ENCODE measurements at regions of chr6 and their contacts with region 1.

Region 1: GRCh38 chr6:29598172-29598747 is 13.3 kb downstream of the OR2H2 start:
- DNase-seq: no peak
- ATAC-seq: no peak
- H3K4me3 ChIP-seq: no peak overlapping the region
- H3K27ac ChIP-seq: no peak overlapping the region
- H3K4me1 ChIP-seq: no peaks in the 10 kb centered on the region
- H3K27me3 ChIP-seq: no peaks in the 10 kb centered on the region
- CTCF ChIP-seq: no peak
- POLR2A ChIP-seq: no peak
- RAD21 ChIP-seq: no peak

Region 2: GRCh38 chr6:29516108-29516507 is 82.2 kb before region 1 on chr6:
- CTCF ChIA-PET with region 1: no interaction called
- POLR2A ChIA-PET with region 1: no interaction called
- dilution Hi-C with region 1: no loop called
- in situ Hi-C with region 1: no loop called
- intact Hi-C with region 1: no loop called
- DNase-seq: peak; percentile 5
- ATAC-seq: no peak
- H3K4me3 ChIP-seq: no peak overlapping the region
- H3K27ac ChIP-seq: no peak overlapping the region
- H3K4me1 ChIP-seq: no peaks in the 10 kb centered on the region
- H3K27me3 ChIP-seq: no peaks in the 10 kb centered on the region
- CTCF ChIP-seq: no peak
- POLR2A ChIP-seq: no peak
- RAD21 ChIP-seq: no peak

Region 3: GRCh38 chr6:29617782-29618557 is 19.7 kb after region 1 on chr6:
- CTCF ChIA-PET with region 1: no interaction called
- POLR2A ChIA-PET with region 1: interaction called, 14 read pairs
- dilution Hi-C with region 1: no loop called
- in situ Hi-C with region 1: no loop called
- intact Hi-C with region 1: no loop called
- DNase-seq: no peak
- ATAC-seq: no peak
- H3K4me3 ChIP-seq: no peak overlapping the region
- H3K27ac ChIP-seq: no peak overlapping the region
- H3K4me1 ChIP-seq: no peaks in the 10 kb centered on the region
- H3K27me3 ChIP-seq: no peaks in the 10 kb centered on the region
- CTCF ChIP-seq: no peak
- POLR2A ChIP-seq: no peak
- RAD21 ChIP-seq: no peak

Measured in IMR-90 (cell line).